Left cardiac atrium (tissue), 4 donors: ENCODE measurements at regions of chr6 and their contacts with region 1.

Region 1: GRCh38 chr6:100664274-100665040 is 199.7 kb upstream of the SIM1 start:
- DNase-seq: no peak
- ATAC-seq: peak in 1 of 2 donors; percentile 34

Region 2: GRCh38 chr6:100116411-100117194 is 547.9 kb before region 1 on chr6:
- intact Hi-C with region 1: loop called (anchors 5 kb)
- DNase-seq: no peak
- ATAC-seq: peak; percentile 47 to 59

Region 3: DNA sequence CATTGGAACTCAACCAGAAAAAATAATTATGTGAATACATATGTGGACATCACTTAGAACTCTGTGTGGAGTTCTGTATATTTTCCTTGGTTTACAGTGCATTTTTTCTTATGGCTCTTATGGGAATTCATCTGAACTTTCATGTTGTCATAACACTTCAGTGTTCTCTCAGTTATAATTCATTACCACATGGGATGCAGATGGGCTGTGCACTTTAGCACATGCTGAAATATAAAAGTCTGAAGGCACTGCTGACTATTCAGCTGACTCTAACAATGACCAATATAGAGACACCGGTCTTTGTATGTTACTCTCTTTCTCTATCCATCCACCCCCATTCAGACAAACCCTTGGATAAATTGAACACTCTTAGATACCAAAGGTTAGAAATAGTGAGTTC is 758.4 kb after region 1 on chr6:
- intact Hi-C with region 1: no loop called
- DNase-seq: no peak
- ATAC-seq: no peak